ENCODE measurements at regions of chr4 and their contacts with region 1.

Region 1: DNA sequence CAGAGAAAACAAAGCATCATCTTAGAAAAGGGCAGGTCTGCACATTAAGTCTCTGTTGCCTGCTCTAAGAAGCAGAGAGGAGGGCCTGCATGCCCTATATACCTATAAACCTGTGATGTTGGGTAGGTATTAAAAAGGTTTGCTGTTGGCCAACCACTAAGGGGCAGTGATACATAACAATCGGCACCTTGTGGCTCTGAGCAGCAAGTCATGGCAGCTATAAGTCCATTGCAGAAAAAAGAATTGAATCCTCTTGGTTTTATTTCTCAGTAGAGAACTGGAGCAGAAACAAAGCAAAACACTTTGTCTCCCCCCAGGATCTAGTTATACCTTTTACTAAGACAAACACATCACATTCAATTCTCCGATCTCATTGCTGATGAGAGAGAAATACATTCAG is 1364.4 kb downstream of the STIM2 start:
- DNase-seq: no peak
- ATAC-seq: peak; percentile 86
- H3K4me3 ChIP-seq: no peak overlapping the region
- H3K27ac ChIP-seq: no peak overlapping the region
- H3K4me1 ChIP-seq: no peaks in the 10 kb centered on the region
- H3K27me3 ChIP-seq: no peaks in the 10 kb centered on the region
- CTCF ChIP-seq: no peak; a peak in 1 of 6 replicates
- EP300 ChIP-seq: no peak
- POLR2A ChIP-seq: no peak
- RAD21 ChIP-seq: 0 out of 2 replicates have a peak, but pooled peaks have one; percentile 12

Region 2: GRCh38 chr4:27027428-27027827 is 1197.6 kb before region 1 on chr4:
- CTCF ChIA-PET with region 1: no interaction called
- POLR2A ChIA-PET with region 1: no interaction called
- RAD21 ChIA-PET with region 1: no interaction called
- SMC1A ChIA-PET with region 1: no interaction called
- in situ Hi-C with region 1: no loop called
- intact Hi-C with region 1: no loop called
- DNase-seq: no peak
- ATAC-seq: no peak
- H3K4me3 ChIP-seq: no peak overlapping the region
- H3K27ac ChIP-seq: no peak overlapping the region
- H3K4me1 ChIP-seq: no peaks in the 10 kb centered on the region
- H3K27me3 ChIP-seq: no peaks in the 10 kb centered on the region
- CTCF ChIP-seq: no peak
- EP300 ChIP-seq: no peak
- POLR2A ChIP-seq: no peak
- RAD21 ChIP-seq: no peak

Region 3: GRCh38 chr4:27692158-27692557 is 532.9 kb before region 1 on chr4:
- CTCF ChIA-PET with region 1: interaction called, 7 read pairs
- POLR2A ChIA-PET with region 1: no interaction called
- RAD21 ChIA-PET with region 1: interaction called, 5 read pairs
- SMC1A ChIA-PET with region 1: interaction called, 15 read pairs
- in situ Hi-C with region 1: no loop called
- intact Hi-C with region 1: loop called (anchors 10 kb)
- DNase-seq: no peak
- ATAC-seq: peak; percentile 90
- H3K4me3 ChIP-seq: no peak overlapping the region
- H3K27ac ChIP-seq: no peak overlapping the region
- H3K4me1 ChIP-seq: no peaks in the 10 kb centered on the region
- H3K27me3 ChIP-seq: no peaks in the 10 kb centered on the region
- CTCF ChIP-seq: peak; percentile 53 to 64 (median 53)
- EP300 ChIP-seq: no peak
- POLR2A ChIP-seq: no peak
- RAD21 ChIP-seq: peak; percentile 53

Region 4: GRCh38 chr4:27894951-27895350 is 330.1 kb before region 1 on chr4:
- CTCF ChIA-PET with region 1: no interaction called
- POLR2A ChIA-PET with region 1: no interaction called
- RAD21 ChIA-PET with region 1: no interaction called
- SMC1A ChIA-PET with region 1: no interaction called
- in situ Hi-C with region 1: no loop called
- intact Hi-C with region 1: no loop called
- DNase-seq: no peak
- ATAC-seq: no peak
- H3K4me3 ChIP-seq: no peak overlapping the region
- H3K27ac ChIP-seq: no peak overlapping the region
- H3K4me1 ChIP-seq: no peaks in the 10 kb centered on the region
- H3K27me3 ChIP-seq: no peaks in the 10 kb centered on the region
- CTCF ChIP-seq: no peak
- EP300 ChIP-seq: no peak
- POLR2A ChIP-seq: no peak
- RAD21 ChIP-seq: no peak

Region 5: DNA sequence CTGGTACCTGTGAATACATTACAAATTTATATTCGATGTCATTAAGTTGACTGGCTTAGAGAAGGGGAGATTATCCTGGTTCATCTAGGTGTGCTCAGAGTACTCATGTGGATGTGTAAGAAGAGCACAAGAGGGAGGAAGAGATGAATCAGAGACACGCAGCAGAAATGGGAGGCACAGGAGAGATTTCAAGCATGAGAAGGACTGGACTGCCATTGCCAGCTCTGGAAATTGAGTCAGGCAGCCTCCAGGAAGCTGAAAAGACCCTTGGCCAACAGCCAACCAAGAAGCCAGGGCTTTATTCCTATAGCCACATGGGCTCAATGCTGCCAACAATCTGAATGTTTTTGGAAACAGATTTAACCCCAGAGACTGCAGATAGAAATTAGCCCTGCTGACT is 25.6 kb after region 1 on chr4:
- CTCF ChIA-PET with region 1: interaction called, 4 read pairs
- POLR2A ChIA-PET with region 1: no interaction called
- RAD21 ChIA-PET with region 1: interaction called, 17 read pairs
- SMC1A ChIA-PET with region 1: interaction called, 41 read pairs
- in situ Hi-C with region 1: no loop called
- intact Hi-C with region 1: no loop called
- DNase-seq: no peak
- ATAC-seq: no peak
- H3K4me3 ChIP-seq: no peak overlapping the region
- H3K27ac ChIP-seq: no peak overlapping the region
- H3K4me1 ChIP-seq: no peaks in the 10 kb centered on the region
- H3K27me3 ChIP-seq: no peaks in the 10 kb centered on the region
- CTCF ChIP-seq: no peak
- EP300 ChIP-seq: no peak
- POLR2A ChIP-seq: no peak
- RAD21 ChIP-seq: no peak

Region 6: DNA sequence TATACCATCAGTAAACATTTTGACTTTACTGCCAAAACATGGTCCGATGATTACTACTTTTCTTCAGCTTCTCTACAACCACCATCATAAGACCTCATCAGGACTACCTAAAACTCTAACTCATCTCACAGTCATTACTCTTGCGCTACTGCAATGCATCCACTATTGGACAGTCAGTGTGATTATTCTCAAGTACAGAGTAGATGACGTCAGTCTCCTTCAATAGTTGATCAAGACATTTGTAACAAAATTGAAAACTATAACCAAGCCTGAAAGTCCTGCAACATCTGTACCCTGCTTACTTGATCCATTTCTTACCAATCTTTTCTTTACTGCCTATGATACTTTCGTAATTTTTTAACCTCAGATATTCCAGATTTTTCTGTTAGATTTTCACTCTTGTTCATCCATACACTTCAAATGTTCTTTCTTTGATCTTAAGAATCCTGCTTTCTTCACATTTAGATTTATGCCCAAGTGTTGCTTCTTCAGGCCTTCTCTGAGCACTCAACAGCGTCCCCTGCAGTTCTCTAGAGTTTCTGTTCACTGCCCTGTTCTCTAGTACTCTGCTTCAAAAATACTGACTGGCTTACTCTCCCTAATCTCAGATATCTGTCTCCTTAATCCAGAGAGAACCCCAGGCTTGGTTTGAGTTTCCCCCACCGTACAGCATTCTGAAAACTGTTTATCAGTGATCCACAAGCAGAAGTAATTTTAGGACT is 153.2 kb after region 1 on chr4:
- CTCF ChIA-PET with region 1: interaction called, 22 read pairs
- POLR2A ChIA-PET with region 1: no interaction called
- RAD21 ChIA-PET with region 1: interaction called, 11 read pairs
- SMC1A ChIA-PET with region 1: interaction called, 15 read pairs
- in situ Hi-C with region 1: no loop called
- intact Hi-C with region 1: no loop called
- DNase-seq: no peak
- ATAC-seq: peak; percentile 40
- H3K4me3 ChIP-seq: no peak overlapping the region
- H3K27ac ChIP-seq: no peak overlapping the region
- H3K4me1 ChIP-seq: no peaks in the 10 kb centered on the region
- H3K27me3 ChIP-seq: no peaks in the 10 kb centered on the region
- CTCF ChIP-seq: 0 out of 6 replicates have a peak, but pooled peaks of 1 of the 3 experiments have one; percentile 4
- EP300 ChIP-seq: no peak
- POLR2A ChIP-seq: no peak
- RAD21 ChIP-seq: no peak

Region 7: GRCh38 chr4:28462764-28463700 is 238.0 kb after region 1 on chr4:
- CTCF ChIA-PET with region 1: interaction called, 4 read pairs
- POLR2A ChIA-PET with region 1: no interaction called
- RAD21 ChIA-PET with region 1: interaction called, 4 read pairs
- SMC1A ChIA-PET with region 1: interaction called, 13 read pairs
- in situ Hi-C with region 1: no loop called
- intact Hi-C with region 1: no loop called
- DNase-seq: no peak
- ATAC-seq: no peak
- H3K4me3 ChIP-seq: no peak overlapping the region
- H3K27ac ChIP-seq: no peak overlapping the region
- H3K4me1 ChIP-seq: no peaks in the 10 kb centered on the region
- H3K27me3 ChIP-seq: no peaks in the 10 kb centered on the region
- CTCF ChIP-seq: no peak
- EP300 ChIP-seq: no peak
- POLR2A ChIP-seq: no peak
- RAD21 ChIP-seq: no peak

Region 8: DNA sequence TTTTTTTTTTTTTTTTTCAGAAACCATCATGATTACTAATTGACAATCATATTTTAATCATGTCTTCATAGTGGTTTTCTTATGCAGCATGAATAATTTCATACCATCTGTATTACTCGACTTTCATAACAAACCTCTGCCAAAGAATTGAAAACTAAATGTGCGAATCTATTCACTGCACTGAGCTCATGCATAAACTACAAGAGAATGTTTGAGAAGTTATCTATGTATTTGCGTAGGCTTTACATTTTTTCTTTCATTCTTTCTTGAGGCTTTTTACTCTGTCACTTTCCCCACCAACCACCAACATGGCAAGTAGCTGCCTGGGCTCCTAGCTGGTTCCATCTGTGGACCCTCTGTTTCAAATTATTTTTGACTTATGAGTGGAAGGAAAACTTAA is 396.5 kb after region 1 on chr4:
- CTCF ChIA-PET with region 1: interaction called, 7 read pairs
- POLR2A ChIA-PET with region 1: no interaction called
- RAD21 ChIA-PET with region 1: interaction called, 13 read pairs
- SMC1A ChIA-PET with region 1: no interaction called
- in situ Hi-C with region 1: no loop called
- intact Hi-C with region 1: no loop called
- DNase-seq: no peak
- ATAC-seq: no peak
- H3K4me3 ChIP-seq: no peak overlapping the region
- H3K27ac ChIP-seq: no peak overlapping the region
- H3K4me1 ChIP-seq: no peaks in the 10 kb centered on the region
- H3K27me3 ChIP-seq: no peaks in the 10 kb centered on the region
- CTCF ChIP-seq: no peak
- EP300 ChIP-seq: no peak
- POLR2A ChIP-seq: no peak
- RAD21 ChIP-seq: no peak

Region 9: GRCh38 chr4:28665306-28665705 is 440.3 kb after region 1 on chr4:
- CTCF ChIA-PET with region 1: no interaction called
- POLR2A ChIA-PET with region 1: no interaction called
- RAD21 ChIA-PET with region 1: no interaction called
- SMC1A ChIA-PET with region 1: no interaction called
- in situ Hi-C with region 1: no loop called
- intact Hi-C with region 1: no loop called
- DNase-seq: no peak
- ATAC-seq: no peak
- H3K4me3 ChIP-seq: no peak overlapping the region
- H3K27ac ChIP-seq: no peak overlapping the region
- H3K4me1 ChIP-seq: no peaks in the 10 kb centered on the region
- H3K27me3 ChIP-seq: no peaks in the 10 kb centered on the region
- CTCF ChIP-seq: no peak
- EP300 ChIP-seq: no peak
- POLR2A ChIP-seq: no peak
- RAD21 ChIP-seq: no peak